Head of caudate nucleus (tissue), 42 donors: ENCODE measurements at regions of chr5 and their contacts with region 1.

Region 1: GRCh38 chr5:90866333-90866732 is 307.7 kb downstream of the ADGRV1 start:
- DNase-seq: no peak

Region 2: GRCh38 chr5:91419571-91420537 is 553.5 kb after region 1 on chr5:
- intact Hi-C with region 1: loop called (anchors 5 kb)
- DNase-seq: peak; percentile 13 to 91 (median 73)